ENCODE measurements at regions of chr16 and their contacts with region 1.

Region 1: DNA sequence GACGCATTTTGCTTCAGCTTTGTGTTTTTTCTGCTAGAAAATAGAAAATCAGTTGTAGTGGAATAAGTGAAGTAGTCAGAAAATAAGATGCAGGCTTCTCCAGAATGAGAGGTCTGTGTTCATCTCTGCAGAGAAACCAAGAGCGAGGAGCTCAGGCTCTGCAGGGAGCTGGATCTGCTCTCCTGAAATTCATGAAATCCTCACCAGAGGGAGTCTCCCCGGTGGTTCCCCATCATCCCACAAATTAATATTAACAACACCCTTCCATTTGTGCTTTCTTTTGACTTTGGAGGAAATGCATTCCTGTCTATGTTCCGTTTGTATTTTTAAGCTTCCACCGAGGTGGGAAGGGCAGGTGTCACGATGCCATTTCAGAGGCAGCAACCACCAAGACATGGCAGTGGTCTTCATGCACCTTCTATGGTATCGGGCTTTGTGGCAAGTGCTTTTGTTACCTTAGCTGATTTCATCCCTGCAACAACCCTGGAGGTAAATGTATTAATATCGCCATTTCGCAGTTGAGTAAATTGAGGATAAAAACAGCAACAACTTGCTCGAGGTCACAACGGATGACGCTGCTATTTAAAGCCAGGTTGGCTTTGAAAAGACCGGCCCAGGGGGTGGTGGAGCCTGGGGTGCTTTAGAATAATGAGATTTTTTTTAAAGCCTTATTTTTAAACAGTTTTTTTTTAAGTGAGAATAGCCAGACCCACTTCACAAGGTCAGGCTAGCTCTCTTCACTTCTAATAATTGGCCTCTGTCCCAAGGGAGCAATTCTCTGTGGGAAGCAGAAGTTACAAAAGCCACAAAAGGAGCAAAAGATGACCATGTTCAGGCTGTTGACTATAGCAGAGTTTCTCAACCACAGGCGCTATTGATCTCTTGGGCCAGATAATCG is 367.6 kb upstream of the ERCC4 start:
- DNase-seq: no peak
- ATAC-seq: 0 out of 2 replicates have a peak, but pooled peaks have one; percentile 30
- H3K4me3 Mint-ChIP-seq: no peak overlapping the region
- H3K27ac Mint-ChIP-seq: no peak overlapping the region
- H3K4me1 Mint-ChIP-seq: peaks cover 32% of the 10 kb centered on the region
- H3K27me3 Mint-ChIP-seq: no peaks in the 10 kb centered on the region
- CTCF ChIP-seq: no peak

Region 2: DNA sequence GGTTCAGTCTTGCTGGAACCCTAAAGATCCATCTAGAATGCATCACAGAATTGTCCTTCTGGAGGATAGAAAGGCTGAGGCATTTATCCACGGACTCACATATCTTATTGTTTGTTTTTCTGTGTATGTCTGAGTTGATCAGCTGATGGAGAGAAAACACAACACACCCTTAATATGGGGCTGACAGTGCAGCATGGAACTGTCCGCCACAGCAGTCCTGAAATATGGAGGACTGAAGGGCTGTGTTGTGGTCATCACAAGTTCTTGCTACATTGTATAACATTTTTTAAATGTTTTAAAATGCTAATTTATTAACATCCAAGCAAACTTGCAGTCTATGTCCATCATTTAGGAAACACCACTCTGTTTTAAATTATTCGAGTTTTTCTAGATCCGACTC is 81.3 kb before region 1 on chr16:
- CTCF ChIA-PET with region 1: no interaction called
- POLR2A ChIA-PET with region 1: no interaction called
- DNase-seq: peak; percentile 24
- ATAC-seq: no peak
- H3K4me3 Mint-ChIP-seq: no peak overlapping the region
- H3K27ac Mint-ChIP-seq: no peak overlapping the region
- H3K4me1 Mint-ChIP-seq: no peaks in the 10 kb centered on the region
- H3K27me3 Mint-ChIP-seq: no peaks in the 10 kb centered on the region
- CTCF ChIP-seq: no peak

Region 3: GRCh38 chr16:13767215-13767614 is 214.9 kb after region 1 on chr16:
- CTCF ChIA-PET with region 1: interaction called, 14 read pairs
- POLR2A ChIA-PET with region 1: no interaction called
- DNase-seq: no peak
- ATAC-seq: peak; percentile 26; the same call in 1 of the 2 replicates
- H3K4me3 Mint-ChIP-seq: no peak overlapping the region
- H3K27ac Mint-ChIP-seq: no peak overlapping the region
- H3K4me1 Mint-ChIP-seq: peaks cover 4% of the 10 kb centered on the region; the same call in 1 of the 2 replicates
- H3K27me3 Mint-ChIP-seq: peaks cover 3% of the 10 kb centered on the region; the same call in 1 of the 2 replicates
- CTCF ChIP-seq: no peak

Measured in WTC11 (cell line).